B cell (primary cell): ENCODE measurements at regions of chr11 and their contacts with region 1.

Region 1: GRCh38 chr11:47917643-47918369 is 62.6 kb upstream of the PTPRJ start:
- DNase-seq: peak; percentile 93
- ATAC-seq: peak; percentile 69
- H3K4me3 ChIP-seq: peak overlapping the region in 1 of 5 experiments; percentile 20
- H3K4me3 Mint-ChIP-seq: peak overlapping the region; percentile 61
- H3K27ac ChIP-seq: peak overlapping the region; percentile 89 to 93
- H3K27ac Mint-ChIP-seq: peak overlapping the region; percentile 98
- H3K4me1 ChIP-seq: peaks cover 87 to 98% of the 10 kb centered on the region in 2 donors
- H3K4me1 Mint-ChIP-seq: peaks cover 84% of the 10 kb centered on the region
- H3K27me3 ChIP-seq: no peaks in the 10 kb centered on the region
- H3K27me3 Mint-ChIP-seq: no peaks in the 10 kb centered on the region
- CTCF ChIP-seq: no peak

Region 2: GRCh38 chr11:47858169-47858543 is 59.6 kb before region 1 on chr11:
- CTCF ChIA-PET with region 1: interaction called, 44 read pairs
- POLR2A ChIA-PET with region 1: interaction called, 8 read pairs
- intact Hi-C with region 1: loop called (anchors 1 kb)
- DNase-seq: no peak
- ATAC-seq: no peak
- H3K4me3 ChIP-seq: peak overlapping the region in 1 of 5 experiments; percentile 54
- H3K4me3 Mint-ChIP-seq: peak overlapping the region; percentile 63
- H3K27ac ChIP-seq: peak overlapping the region; percentile 80 to 84
- H3K27ac Mint-ChIP-seq: peak overlapping the region; percentile 86
- H3K4me1 ChIP-seq: peaks cover 98 to 99% of the 10 kb centered on the region in 2 donors
- H3K4me1 Mint-ChIP-seq: peaks cover 64% of the 10 kb centered on the region
- H3K27me3 ChIP-seq: no peaks in the 10 kb centered on the region
- H3K27me3 Mint-ChIP-seq: no peaks in the 10 kb centered on the region
- CTCF ChIP-seq: no peak

Region 3: GRCh38 chr11:47863189-47863892 is 54.5 kb before region 1 on chr11:
- CTCF ChIA-PET with region 1: interaction called, 6 read pairs
- POLR2A ChIA-PET with region 1: interaction called, 8 read pairs
- intact Hi-C with region 1: loop called (anchors 1 kb)
- DNase-seq: peak; percentile 82
- ATAC-seq: peak; percentile 81
- H3K4me3 ChIP-seq: peak overlapping the region in 1 of 5 experiments; percentile 52
- H3K4me3 Mint-ChIP-seq: peak overlapping the region; percentile 46
- H3K27ac ChIP-seq: peak overlapping the region; percentile 77 to 78
- H3K27ac Mint-ChIP-seq: peak overlapping the region; percentile 85
- H3K4me1 ChIP-seq: peaks cover 72 to 81% of the 10 kb centered on the region in 2 donors
- H3K4me1 Mint-ChIP-seq: peaks cover 63% of the 10 kb centered on the region
- H3K27me3 ChIP-seq: no peaks in the 10 kb centered on the region
- H3K27me3 Mint-ChIP-seq: no peaks in the 10 kb centered on the region
- CTCF ChIP-seq: no peak

Region 4: GRCh38 chr11:47899801-47900200 is 18.0 kb before region 1 on chr11:
- CTCF ChIA-PET with region 1: interaction called, 4 read pairs
- POLR2A ChIA-PET with region 1: interaction called, 8 read pairs
- intact Hi-C with region 1: loop called (anchors 1 kb)
- DNase-seq: peak; percentile 91
- ATAC-seq: peak; percentile 93
- H3K4me3 ChIP-seq: no peak overlapping the region
- H3K4me3 Mint-ChIP-seq: peak overlapping the region; percentile 61
- H3K27ac ChIP-seq: peak overlapping the region; percentile 76 to 88
- H3K27ac Mint-ChIP-seq: peak overlapping the region; percentile 96
- H3K4me1 ChIP-seq: peaks cover 33 to 38% of the 10 kb centered on the region in 2 donors
- H3K4me1 Mint-ChIP-seq: peaks cover 38% of the 10 kb centered on the region
- H3K27me3 ChIP-seq: no peaks in the 10 kb centered on the region
- H3K27me3 Mint-ChIP-seq: no peaks in the 10 kb centered on the region
- CTCF ChIP-seq: no peak

Region 5: GRCh38 chr11:47932544-47932943 is 14.7 kb after region 1 on chr11:
- CTCF ChIA-PET with region 1: interaction called, 51 read pairs
- POLR2A ChIA-PET with region 1: interaction called, 12 read pairs
- intact Hi-C with region 1: loop called (anchors 1 kb)
- DNase-seq: no peak
- ATAC-seq: no peak
- H3K4me3 ChIP-seq: no peak overlapping the region
- H3K4me3 Mint-ChIP-seq: no peak overlapping the region
- H3K27ac ChIP-seq: peak overlapping the region in 1 of 2 donors; percentile 4
- H3K27ac Mint-ChIP-seq: no peak overlapping the region
- H3K4me1 ChIP-seq: peaks cover 27 to 37% of the 10 kb centered on the region in 2 donors
- H3K4me1 Mint-ChIP-seq: peaks cover 40% of the 10 kb centered on the region
- H3K27me3 ChIP-seq: no peaks in the 10 kb centered on the region
- H3K27me3 Mint-ChIP-seq: no peaks in the 10 kb centered on the region
- CTCF ChIP-seq: no peak

Region 6: DNA sequence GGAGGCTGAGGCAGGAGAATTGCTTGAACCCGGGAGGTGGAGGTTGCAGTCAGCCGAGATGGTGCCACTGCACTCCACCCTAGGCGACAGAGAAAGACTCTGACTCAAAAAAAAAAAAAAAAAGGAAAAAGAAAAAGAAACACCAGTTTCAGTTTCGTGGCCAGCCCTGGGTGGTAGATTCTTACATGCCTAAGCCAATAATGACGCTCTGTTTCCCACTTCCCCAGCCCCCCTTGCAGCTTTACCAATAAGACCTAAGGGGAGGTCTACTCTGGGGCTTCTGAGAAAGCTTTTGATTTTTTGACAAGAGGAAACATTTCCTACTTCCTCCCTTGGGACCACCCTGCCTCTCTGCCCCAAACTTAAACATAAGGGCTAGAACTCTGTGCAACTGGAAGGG is 32.6 kb after region 1 on chr11:
- CTCF ChIA-PET with region 1: interaction called, 5 read pairs
- POLR2A ChIA-PET with region 1: interaction called, 4 read pairs
- intact Hi-C with region 1: loop called (anchors 1 kb)
- DNase-seq: peak; percentile 91
- ATAC-seq: peak; percentile 98
- H3K4me3 ChIP-seq: peak overlapping the region in 2 of 5 experiments; percentile 19 to 49
- H3K4me3 Mint-ChIP-seq: peak overlapping the region; percentile 48
- H3K27ac ChIP-seq: peak overlapping the region; percentile 58 to 66
- H3K27ac Mint-ChIP-seq: peak overlapping the region; percentile 86
- H3K4me1 ChIP-seq: peaks cover 34 to 42% of the 10 kb centered on the region in 2 donors
- H3K4me1 Mint-ChIP-seq: peaks cover 48% of the 10 kb centered on the region
- H3K27me3 ChIP-seq: no peaks in the 10 kb centered on the region
- H3K27me3 Mint-ChIP-seq: no peaks in the 10 kb centered on the region
- CTCF ChIP-seq: no peak